AG04449 (cell line): ENCODE measurements at regions of chr11 and their contacts with region 1.

Region 1: DNA sequence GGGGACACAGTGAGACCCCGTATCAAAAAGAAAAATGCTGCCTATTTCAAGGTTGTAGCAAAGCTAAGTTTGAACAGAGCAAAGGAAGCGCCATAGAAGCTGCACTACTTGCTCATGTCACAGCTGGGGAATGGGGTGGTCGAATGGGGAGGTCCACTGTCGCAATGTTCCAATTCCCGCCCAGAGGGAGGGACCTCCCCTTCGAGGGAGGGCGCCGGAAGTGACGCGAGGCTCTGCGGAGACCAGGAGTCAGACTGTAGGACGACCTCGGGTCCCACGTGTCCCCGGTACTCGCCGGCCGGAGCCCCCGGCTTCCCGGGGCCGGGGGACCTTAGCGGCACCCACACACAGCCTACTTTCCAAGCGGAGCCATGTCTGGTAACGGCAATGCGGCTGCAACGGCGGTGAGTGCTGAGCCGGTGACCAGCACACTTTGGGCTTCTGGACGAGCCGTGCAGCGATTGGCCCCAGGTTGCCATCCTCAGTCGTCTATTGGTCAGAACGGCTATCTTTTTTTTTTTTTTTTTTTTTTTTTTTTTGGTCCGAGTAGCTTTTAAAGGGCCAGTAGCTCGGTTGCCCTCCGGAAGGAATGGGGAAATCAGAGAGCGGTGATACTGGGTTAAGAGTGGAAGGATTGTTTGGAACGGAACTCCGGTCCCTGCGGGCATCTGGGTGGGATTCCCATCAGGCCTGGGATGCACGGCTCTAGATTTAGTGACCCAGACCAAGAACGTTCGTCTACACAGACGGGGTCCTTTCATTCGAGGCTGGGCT is at the start of gene HMBS:
- DNase-seq: no peak
- H3K4me3 ChIP-seq: peak within 1 kb of the TSS; percentile 94
- CTCF ChIP-seq: no peak

Region 2: DNA sequence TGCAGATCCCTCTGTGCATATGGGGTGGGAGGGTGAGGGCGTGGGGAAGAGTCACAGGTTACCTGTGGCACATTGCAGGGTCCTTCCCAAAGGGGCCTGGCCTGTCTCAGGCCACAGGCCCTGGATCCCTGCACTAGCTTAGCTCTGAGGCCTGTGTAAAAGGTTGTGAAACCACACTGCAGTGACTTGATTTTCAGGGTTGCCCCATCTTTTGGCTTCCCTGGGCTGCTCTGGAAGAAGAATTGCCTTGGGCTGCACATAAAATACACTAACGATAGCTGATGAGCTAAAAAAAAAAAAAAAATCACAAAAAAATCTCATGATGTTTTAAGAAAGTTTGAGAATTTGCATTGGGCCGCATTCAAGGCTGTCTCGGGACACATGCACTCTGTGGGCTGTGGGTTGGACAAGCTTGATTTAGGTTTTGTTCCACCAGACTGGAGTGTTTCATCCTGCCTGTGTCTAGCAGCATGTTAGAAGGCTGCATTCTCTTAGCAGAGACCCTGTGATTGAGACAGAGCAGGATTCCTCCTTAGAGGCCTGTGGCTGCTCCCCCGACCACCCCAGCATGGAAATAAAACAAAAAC is 369.5 kb before region 1 on chr11:
- CTCF ChIA-PET with region 1: no interaction called
- POLR2A ChIA-PET with region 1: no interaction called
- DNase-seq: no peak
- H3K4me3 ChIP-seq: no peak overlapping the region
- CTCF ChIP-seq: no peak

Region 3: GRCh38 chr11:119067371-119068222 is 17.3 kb before region 1 on chr11 and contains the start of gene VPS11:
- CTCF ChIA-PET with region 1: interaction called, 8 read pairs
- POLR2A ChIA-PET with region 1: interaction called, 15 read pairs
- DNase-seq: peak; percentile 77
- H3K4me3 ChIP-seq: peak within 1 kb of the TSS; percentile 92
- CTCF ChIP-seq: no peak